B cell (primary cell): ENCODE measurements at regions of chr5 and their contacts with region 1.

Region 1: DNA sequence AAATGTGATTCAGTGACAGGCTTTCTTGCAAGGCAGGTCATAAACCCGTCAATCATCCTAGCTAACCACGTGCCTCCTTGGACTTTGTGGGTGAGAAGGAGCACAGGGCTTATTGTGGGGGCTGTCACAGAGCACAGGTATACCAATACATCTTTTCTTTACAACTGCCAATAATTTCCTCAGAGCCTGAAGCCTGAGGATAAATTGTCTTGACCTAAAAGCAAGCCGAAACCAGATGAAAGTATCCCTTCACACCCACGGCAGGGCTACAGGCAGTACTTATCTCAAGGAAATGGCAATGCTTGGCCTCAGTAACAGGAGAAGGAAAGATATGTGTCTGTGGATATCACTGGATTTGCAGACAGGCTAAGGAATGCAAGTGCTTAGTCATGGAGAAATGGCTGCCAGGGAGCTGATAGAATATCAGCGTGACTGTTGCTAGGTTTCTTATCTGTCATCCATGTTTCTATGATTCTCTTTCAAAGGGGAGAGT is 90.3 kb upstream of the ZNF366 start:
- DNase-seq: no peak
- ATAC-seq: no peak
- H3K4me3 ChIP-seq: no peak overlapping the region
- H3K4me3 Mint-ChIP-seq: no peak overlapping the region
- H3K27ac ChIP-seq: peak overlapping the region in 1 of 2 donors; percentile 92
- H3K27ac Mint-ChIP-seq: no peak overlapping the region
- H3K4me1 ChIP-seq: peaks cover 15 to 18% of the 10 kb centered on the region in 2 donors
- H3K4me1 Mint-ChIP-seq: peaks cover 18% of the 10 kb centered on the region
- H3K27me3 ChIP-seq: no peaks in the 10 kb centered on the region
- H3K27me3 Mint-ChIP-seq: peaks cover 3% of the 10 kb centered on the region
- CTCF ChIP-seq: no peak

Region 2: DNA sequence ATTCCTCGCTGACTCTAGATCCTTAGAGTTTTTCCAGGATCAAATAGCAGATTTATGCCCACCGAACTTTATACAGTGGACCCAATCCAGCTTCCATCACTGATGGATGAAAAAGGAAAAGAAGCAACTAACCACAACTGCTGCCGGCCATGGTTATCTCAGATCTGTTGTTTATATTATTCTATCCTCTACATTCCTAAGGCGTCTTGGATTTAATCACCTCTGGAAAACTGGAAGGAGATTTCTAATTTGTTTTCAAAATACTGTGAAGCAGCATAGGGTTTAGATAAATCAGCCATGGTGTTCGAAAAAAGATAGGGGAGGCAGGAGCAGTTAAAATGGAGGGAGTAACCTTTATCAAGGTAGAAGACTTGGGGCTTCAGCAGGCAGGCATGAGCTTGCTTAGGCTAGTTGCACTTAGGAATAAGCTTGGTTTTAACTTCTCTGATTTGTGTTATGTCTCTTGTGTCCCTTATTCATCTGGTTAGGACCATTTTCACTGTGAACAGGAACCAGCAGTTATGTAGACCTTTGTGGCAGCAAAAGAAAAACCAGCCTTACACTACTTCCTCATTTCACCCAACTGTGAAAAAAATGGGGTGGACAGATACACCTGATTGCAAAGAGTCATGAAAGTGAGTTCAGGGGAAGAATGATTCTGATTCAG is 89.5 kb before region 1 on chr5:
- CTCF ChIA-PET with region 1: no interaction called
- POLR2A ChIA-PET with region 1: no interaction called
- intact Hi-C with region 1: loop called (anchors 5 kb)
- DNase-seq: peak; percentile 75
- ATAC-seq: peak; percentile 93
- H3K4me3 ChIP-seq: no peak overlapping the region
- H3K4me3 Mint-ChIP-seq: peak overlapping the region; percentile 24
- H3K27ac ChIP-seq: peak overlapping the region in 1 of 2 donors; percentile 8
- H3K27ac Mint-ChIP-seq: peak overlapping the region; percentile 67
- H3K4me1 ChIP-seq: peaks cover 30 to 34% of the 10 kb centered on the region in 2 donors
- H3K4me1 Mint-ChIP-seq: peaks cover 36% of the 10 kb centered on the region
- H3K27me3 ChIP-seq: no peaks in the 10 kb centered on the region
- H3K27me3 Mint-ChIP-seq: peaks cover 14% of the 10 kb centered on the region
- CTCF ChIP-seq: no peak

Region 3: GRCh38 chr5:72611118-72611730 is 13.7 kb after region 1 on chr5:
- CTCF ChIA-PET with region 1: interaction called, 13 read pairs
- POLR2A ChIA-PET with region 1: no interaction called
- intact Hi-C with region 1: no loop called
- DNase-seq: peak; percentile 60
- ATAC-seq: peak; percentile 76
- H3K4me3 ChIP-seq: no peak overlapping the region
- H3K4me3 Mint-ChIP-seq: no peak overlapping the region
- H3K27ac ChIP-seq: no peak overlapping the region
- H3K27ac Mint-ChIP-seq: no peak overlapping the region
- H3K4me1 ChIP-seq: no peaks in the 10 kb centered on the region
- H3K4me1 Mint-ChIP-seq: no peaks in the 10 kb centered on the region
- H3K27me3 ChIP-seq: peaks cover 0 to 4% (median 0%) of the 10 kb centered on the region in 4 experiments
- H3K27me3 Mint-ChIP-seq: peaks cover 15% of the 10 kb centered on the region
- CTCF ChIP-seq: peak; percentile 87